ENCODE measurements at regions of chr7 and their contacts with region 1.

Region 1: DNA sequence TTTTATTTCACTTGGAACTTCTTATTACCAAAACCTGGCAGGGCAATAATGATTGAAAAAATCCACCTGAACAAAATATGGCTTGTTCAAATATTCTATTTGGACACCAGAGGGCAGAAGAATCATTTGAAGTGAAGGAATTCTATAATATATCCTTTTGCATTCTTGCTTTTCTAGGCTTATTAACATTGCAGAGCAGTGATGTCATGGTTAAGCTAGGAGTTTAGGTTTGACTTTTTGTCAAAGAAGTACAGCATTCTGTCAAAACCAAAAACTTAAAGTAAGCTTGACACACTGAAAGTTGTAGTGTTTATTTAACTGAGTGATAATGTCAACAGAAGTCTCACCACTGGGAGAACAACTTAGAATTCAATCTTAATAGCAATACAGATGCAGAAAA is 156.0 kb downstream of the SEMA3D start:
- DNase-seq: no peak
- H3K4me3 ChIP-seq: no peak overlapping the region
- H3K27ac ChIP-seq: no peak overlapping the region
- H3K4me1 ChIP-seq: peaks cover 2 to 9% of the 10 kb centered on the region in 2 donors
- H3K27me3 ChIP-seq: no peaks in the 10 kb centered on the region
- CTCF ChIP-seq: peak in 4 of 6 experiments; percentile 13 to 72 (median 62)
- POLR2A ChIP-seq: no peak

Region 2: DNA sequence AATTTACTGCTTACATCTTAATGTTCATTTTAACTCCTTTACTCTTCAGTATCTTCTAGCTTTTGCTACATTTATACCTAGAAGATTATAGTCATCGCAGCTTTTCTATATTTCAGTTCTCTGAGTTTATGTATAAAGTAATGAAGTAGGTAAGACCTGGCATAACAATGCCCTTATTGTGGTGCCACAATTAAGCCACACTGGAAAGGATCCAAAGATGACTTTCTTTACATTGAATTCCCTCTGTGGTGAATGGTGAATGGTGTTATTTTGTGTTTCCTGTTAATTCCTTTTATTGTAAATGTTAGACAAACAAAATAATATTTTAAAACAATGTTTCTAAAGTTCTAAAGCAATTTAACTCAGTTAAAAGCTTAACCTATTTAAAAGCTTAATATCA is 119.7 kb after region 1 on chr7:
- intact Hi-C with region 1: no loop called
- DNase-seq: no peak
- H3K4me3 ChIP-seq: no peak overlapping the region
- H3K27ac ChIP-seq: no peak overlapping the region
- H3K4me1 ChIP-seq: no peaks in the 10 kb centered on the region
- H3K27me3 ChIP-seq: no peaks in the 10 kb centered on the region
- CTCF ChIP-seq: no peak
- POLR2A ChIP-seq: no peak

Region 3: GRCh38 chr7:85554236-85555178 is 523.6 kb after region 1 on chr7:
- intact Hi-C with region 1: loop called (anchors 10 kb)
- DNase-seq: no peak
- H3K4me3 ChIP-seq: no peak overlapping the region
- H3K27ac ChIP-seq: no peak overlapping the region
- H3K4me1 ChIP-seq: no peaks in the 10 kb centered on the region
- H3K27me3 ChIP-seq: no peaks in the 10 kb centered on the region
- CTCF ChIP-seq: peak in 5 of 6 experiments; percentile 38 to 76 (median 68)
- POLR2A ChIP-seq: no peak

Region 4: DNA sequence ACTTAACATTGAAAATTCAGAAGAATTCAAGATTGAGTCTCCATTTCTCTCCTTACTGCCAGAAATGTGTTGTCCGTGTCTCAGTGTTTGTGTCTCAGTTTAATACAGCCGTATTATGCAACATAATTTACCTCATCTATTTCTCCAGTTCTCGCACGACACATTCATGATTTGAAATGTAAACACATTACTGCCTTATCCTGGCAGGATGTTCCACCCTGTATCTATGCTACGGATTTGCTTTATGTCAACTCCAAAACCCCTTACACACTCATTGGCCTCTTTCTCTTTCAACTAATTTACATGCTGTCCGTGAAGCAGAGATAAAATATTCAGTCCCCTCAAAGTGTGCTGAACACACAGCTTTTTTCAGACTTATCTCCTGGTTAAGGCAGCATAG is 809.7 kb after region 1 on chr7:
- intact Hi-C with region 1: loop called (anchors 10 kb)
- DNase-seq: no peak
- H3K4me3 ChIP-seq: no peak overlapping the region
- H3K27ac ChIP-seq: no peak overlapping the region
- H3K4me1 ChIP-seq: no peaks in the 10 kb centered on the region
- H3K27me3 ChIP-seq: no peaks in the 10 kb centered on the region
- CTCF ChIP-seq: no peak
- POLR2A ChIP-seq: no peak

Measured in thyroid gland (tissue), 4 donors.